Adrenal gland (tissue), 19 donors: ENCODE measurements at regions of chr17 and their contacts with region 1.

Region 1: GRCh38 chr17:44919885-44920564 is 4.7 kb upstream of the GFAP start:
- DNase-seq: peak; percentile 82 to 93 (median 88)
- H3K4me3 ChIP-seq: no peak overlapping the region
- H3K27ac ChIP-seq: no peak overlapping the region
- H3K4me1 ChIP-seq: peaks cover 9 to 18% of the 10 kb centered on the region in 2 donors
- H3K27me3 ChIP-seq: no peaks in the 10 kb centered on the region
- CTCF ChIP-seq: peak; percentile 55 to 93 (median 85)
- POLR2A ChIP-seq: no peak

Region 2: DNA sequence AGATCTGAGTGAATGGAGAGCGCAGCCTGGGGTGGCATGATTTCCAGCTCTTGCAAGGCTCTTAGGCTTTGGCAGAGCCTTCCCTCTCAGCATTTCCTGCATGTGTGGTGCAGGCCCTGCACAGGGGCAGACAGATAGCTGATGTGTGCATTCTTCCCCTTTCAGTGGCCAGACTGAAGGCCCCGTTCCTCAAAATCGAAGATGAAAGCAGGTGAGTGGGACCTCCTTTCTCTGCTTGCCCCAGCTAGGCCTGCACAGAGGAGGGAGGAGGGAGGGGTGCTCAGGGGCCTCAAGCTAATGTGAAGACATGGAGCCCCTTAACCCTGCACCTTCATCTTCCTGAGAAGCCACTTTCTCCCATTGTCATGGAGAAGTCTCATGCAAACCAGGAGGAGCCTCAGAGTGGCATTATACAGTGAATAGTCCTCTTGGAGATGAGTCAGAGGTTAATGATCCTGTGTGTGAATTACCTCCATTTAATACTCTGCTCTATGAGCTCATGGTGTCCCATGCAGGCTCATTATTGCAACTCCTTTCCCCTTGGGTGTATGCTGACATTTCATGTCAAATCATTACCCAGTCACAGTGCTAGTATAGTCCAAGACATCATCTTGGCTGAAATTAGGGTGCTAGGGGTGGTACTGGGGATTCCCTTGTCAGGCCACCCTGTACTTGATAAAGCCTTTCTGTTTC is 181.7 kb before region 1 on chr17:
- intact Hi-C with region 1: no loop called
- DNase-seq: no peak
- H3K4me3 ChIP-seq: no peak overlapping the region
- H3K27ac ChIP-seq: no peak overlapping the region
- H3K4me1 ChIP-seq: no peaks in the 10 kb centered on the region
- H3K27me3 ChIP-seq: no peaks in the 10 kb centered on the region
- CTCF ChIP-seq: no peak
- POLR2A ChIP-seq: no peak

Region 3: GRCh38 chr17:45021607-45022287 is 101.7 kb after region 1 on chr17:
- intact Hi-C with region 1: loop called (anchors 2 to 5 kb)
- DNase-seq: peak; percentile 66 to 73 (median 70)
- H3K4me3 ChIP-seq: peak overlapping the region in 1 of 4 donors; percentile 54
- H3K27ac ChIP-seq: peak overlapping the region in 4 of 5 donors; percentile 57 to 82 (median 75)
- H3K4me1 ChIP-seq: peaks cover 20 to 39% of the 10 kb centered on the region in 2 donors
- H3K27me3 ChIP-seq: no peaks in the 10 kb centered on the region
- CTCF ChIP-seq: peak; percentile 25 to 98 (median 73)
- POLR2A ChIP-seq: peak in 1 of 2 donors; percentile 38

Region 4: GRCh38 chr17:45098869-45099616 is 179.0 kb after region 1 on chr17:
- intact Hi-C with region 1: loop called (anchors 5 to 10 kb)
- DNase-seq: peak; percentile 88 to 98 (median 95)
- H3K4me3 ChIP-seq: no peak overlapping the region
- H3K27ac ChIP-seq: peak overlapping the region in 3 of 5 donors; percentile 48 to 66 (median 56)
- H3K4me1 ChIP-seq: peaks cover 13 to 46% of the 10 kb centered on the region in 2 donors
- H3K27me3 ChIP-seq: no peaks in the 10 kb centered on the region
- CTCF ChIP-seq: peak; percentile 82 to 93 (median 90)
- POLR2A ChIP-seq: no peak

Region 5: GRCh38 chr17:45108595-45109521 is 188.8 kb after region 1 on chr17:
- intact Hi-C with region 1: loop called in 1 of 2 experiments (anchors 10 kb)
- DNase-seq: peak in 1 of 7 donors; percentile 49
- H3K4me3 ChIP-seq: no peak overlapping the region
- H3K27ac ChIP-seq: peak overlapping the region in 2 of 5 donors; percentile 11 to 79
- H3K4me1 ChIP-seq: peaks cover 26% of the 10 kb centered on the region in 2 donors
- H3K27me3 ChIP-seq: no peaks in the 10 kb centered on the region
- CTCF ChIP-seq: no peak
- POLR2A ChIP-seq: no peak